Psoas muscle (tissue), 8 donors: ENCODE measurements at regions of chr19 and their contacts with region 1.

Region 1: DNA sequence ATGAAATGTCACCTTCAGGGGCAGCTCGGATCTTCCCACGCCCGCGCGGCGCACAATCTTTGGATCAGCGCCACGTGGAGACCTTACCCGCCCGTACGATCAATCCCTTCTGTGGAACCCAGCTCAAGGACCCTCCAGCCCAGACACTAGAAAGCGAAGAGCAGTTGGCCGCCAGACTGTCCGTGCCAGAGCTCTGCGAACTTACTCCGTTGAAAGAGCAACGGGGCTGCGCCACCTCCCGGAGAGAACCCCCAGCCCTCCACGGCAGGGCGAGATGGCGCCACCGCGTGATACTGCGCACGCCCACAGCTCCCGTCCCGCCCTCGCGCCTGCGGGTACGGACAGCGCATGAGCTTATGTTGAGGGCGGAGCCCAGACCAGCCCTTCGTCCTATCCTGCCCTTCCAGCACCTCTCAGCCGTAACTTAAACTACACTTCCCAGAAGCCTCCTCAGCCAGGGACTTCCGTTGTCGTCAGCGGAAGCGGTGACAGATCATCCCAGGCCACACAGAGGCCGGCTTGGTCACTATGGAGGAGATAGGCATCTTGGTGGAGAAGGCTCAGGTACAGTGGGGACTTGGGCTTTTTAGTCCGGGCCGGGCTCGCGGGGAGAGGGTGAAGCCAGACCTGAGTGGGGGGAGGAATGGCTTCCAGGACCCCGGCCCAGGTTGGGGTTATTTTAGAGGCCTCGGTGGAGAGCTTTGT is at the start of gene PSMC4:
- DNase-seq: peak; percentile 97 to 99
- ATAC-seq: peak; percentile 98 to 99 (median 99)
- H3K4me3 ChIP-seq: peak within 1 kb of the TSS; percentile 82
- H3K27ac ChIP-seq: peak within 1 kb of the TSS; percentile 94
- H3K4me1 ChIP-seq: peaks cover 17% of the 10 kb centered on the region
- H3K27me3 ChIP-seq: no peaks in the 10 kb centered on the region
- CTCF ChIP-seq: peak; percentile 64
- total RNA-seq, gene PSMC4: 76.0 to 154 (median 104) TPM

Region 2: DNA sequence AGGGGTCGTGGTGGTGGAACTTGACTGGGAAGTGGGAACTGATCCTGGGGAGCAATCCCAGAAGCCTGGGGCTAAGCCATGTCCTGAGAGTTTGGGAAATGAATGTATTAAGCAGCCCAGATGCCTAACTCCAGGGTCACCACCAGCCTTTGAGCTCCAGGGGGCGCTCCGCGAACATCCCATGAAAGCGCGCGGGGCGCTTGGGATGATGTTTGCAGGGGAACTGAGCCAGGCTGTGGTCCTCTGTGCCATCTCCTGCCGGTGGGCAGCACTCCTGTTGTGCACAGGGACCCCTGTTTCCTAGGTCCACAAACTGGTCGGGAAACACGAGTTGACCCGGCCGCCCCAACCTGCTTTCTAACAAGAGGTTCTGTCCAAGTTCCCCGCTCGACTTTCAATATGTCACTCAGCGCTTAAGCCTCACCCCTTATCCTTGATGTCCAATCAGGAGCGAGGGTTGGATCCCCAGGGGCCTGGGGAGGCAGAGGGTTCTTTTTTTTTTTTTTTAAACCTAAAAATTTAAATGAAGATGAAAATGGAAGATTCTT is 177.8 kb before region 1 on chr19:
- intact Hi-C with region 1: loop called (anchors 1 to 10 kb)
- DNase-seq: peak; percentile 82 to 87
- ATAC-seq: peak; percentile 95 to 99 (median 98)
- H3K4me3 ChIP-seq: peak overlapping the region; percentile 77
- H3K27ac ChIP-seq: no peak overlapping the region
- H3K4me1 ChIP-seq: no peaks in the 10 kb centered on the region
- H3K27me3 ChIP-seq: no peaks in the 10 kb centered on the region
- CTCF ChIP-seq: peak; percentile 92

Region 3: GRCh38 chr19:39878398-39878797 is 92.4 kb before region 1 on chr19:
- intact Hi-C with region 1: no loop called
- DNase-seq: no peak
- ATAC-seq: no peak
- H3K4me3 ChIP-seq: no peak overlapping the region
- H3K27ac ChIP-seq: no peak overlapping the region
- H3K4me1 ChIP-seq: no peaks in the 10 kb centered on the region
- H3K27me3 ChIP-seq: peaks cover 0 to 7% (median 0%) of the 10 kb centered on the region in 3 donors
- CTCF ChIP-seq: no peak

Region 4: GRCh38 chr19:39996811-39997594 is 26.2 kb after region 1 on chr19 and contains the start of gene ZNF546:
- intact Hi-C with region 1: loop called in 1 of 2 experiments (anchors 2 kb)
- DNase-seq: peak; percentile 92 to 94
- ATAC-seq: peak; percentile 97 to 98 (median 98)
- H3K4me3 ChIP-seq: peak within 1 kb of the TSS; percentile 96
- H3K27ac ChIP-seq: peak within 1 kb of the TSS; percentile 86
- H3K4me1 ChIP-seq: peaks cover 18% of the 10 kb centered on the region
- H3K27me3 ChIP-seq: no peaks in the 10 kb centered on the region
- CTCF ChIP-seq: no peak
- total RNA-seq, gene ZNF546: 3.7 to 9.2 (median 6.4) TPM

Region 5: GRCh38 chr19:40013991-40014390 is 43.2 kb after region 1 on chr19:
- intact Hi-C with region 1: no loop called
- DNase-seq: no peak
- ATAC-seq: no peak
- H3K4me3 ChIP-seq: no peak overlapping the region
- H3K27ac ChIP-seq: no peak overlapping the region
- H3K4me1 ChIP-seq: no peaks in the 10 kb centered on the region
- H3K27me3 ChIP-seq: no peaks in the 10 kb centered on the region
- CTCF ChIP-seq: no peak